ENCODE measurements at regions of chr1 and their contacts with region 1.

Region 1: DNA sequence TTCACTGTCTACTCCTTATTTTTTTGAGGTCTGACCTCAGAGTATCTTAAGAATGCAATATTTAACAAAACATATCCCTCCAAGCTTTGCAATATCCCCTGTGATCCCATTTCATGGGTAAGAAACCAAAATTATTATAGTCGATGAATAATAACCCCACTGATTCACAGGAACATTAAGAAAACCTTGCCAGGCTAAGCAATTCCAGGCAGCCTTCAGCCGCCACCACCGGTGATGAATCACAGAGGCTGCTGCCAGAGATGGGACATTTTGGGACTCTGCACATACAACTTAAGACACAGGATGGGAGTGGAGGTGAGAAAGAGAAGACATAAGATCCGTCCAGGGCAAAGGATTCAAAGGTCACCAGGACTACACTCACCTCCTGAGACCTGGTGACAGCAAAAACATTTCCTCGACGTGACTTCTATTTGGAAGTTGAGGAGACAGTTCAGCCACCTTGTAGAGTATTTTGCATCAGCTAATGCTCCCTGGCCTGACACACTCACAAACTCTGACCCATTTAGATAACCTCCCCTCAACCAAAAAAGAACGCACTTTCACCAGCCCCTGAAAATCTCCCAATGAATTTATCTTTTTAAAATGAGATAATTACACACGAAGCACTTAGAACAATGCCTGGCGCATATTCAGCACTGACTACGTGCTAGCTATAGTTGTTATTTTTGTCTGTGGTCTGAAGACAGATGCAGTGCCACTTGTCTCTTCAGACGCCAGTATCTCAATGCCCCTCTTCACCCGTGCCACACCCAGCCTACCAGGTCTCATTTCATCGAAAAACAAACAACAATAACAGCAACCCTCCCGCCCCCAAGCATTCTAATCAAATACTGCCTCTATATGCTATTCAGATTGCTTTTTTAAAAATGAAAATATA is 17.8 kb upstream of the OVAAL start:
- DNase-seq: peak in 1 of 3 donors; percentile 52
- ATAC-seq: peak; percentile 42 to 77
- H3K4me3 ChIP-seq: no peak overlapping the region
- H3K27ac ChIP-seq: peak overlapping the region; percentile 91
- H3K4me1 ChIP-seq: peaks cover 3% of the 10 kb centered on the region
- H3K27me3 ChIP-seq: no peaks in the 10 kb centered on the region

Region 2: GRCh38 chr1:180386745-180387367 is 154.1 kb before region 1 on chr1:
- intact Hi-C with region 1: no loop called
- DNase-seq: no peak
- ATAC-seq: no peak
- H3K4me3 ChIP-seq: no peak overlapping the region
- H3K27ac ChIP-seq: no peak overlapping the region
- H3K4me1 ChIP-seq: no peaks in the 10 kb centered on the region
- H3K27me3 ChIP-seq: no peaks in the 10 kb centered on the region

Region 3: DNA sequence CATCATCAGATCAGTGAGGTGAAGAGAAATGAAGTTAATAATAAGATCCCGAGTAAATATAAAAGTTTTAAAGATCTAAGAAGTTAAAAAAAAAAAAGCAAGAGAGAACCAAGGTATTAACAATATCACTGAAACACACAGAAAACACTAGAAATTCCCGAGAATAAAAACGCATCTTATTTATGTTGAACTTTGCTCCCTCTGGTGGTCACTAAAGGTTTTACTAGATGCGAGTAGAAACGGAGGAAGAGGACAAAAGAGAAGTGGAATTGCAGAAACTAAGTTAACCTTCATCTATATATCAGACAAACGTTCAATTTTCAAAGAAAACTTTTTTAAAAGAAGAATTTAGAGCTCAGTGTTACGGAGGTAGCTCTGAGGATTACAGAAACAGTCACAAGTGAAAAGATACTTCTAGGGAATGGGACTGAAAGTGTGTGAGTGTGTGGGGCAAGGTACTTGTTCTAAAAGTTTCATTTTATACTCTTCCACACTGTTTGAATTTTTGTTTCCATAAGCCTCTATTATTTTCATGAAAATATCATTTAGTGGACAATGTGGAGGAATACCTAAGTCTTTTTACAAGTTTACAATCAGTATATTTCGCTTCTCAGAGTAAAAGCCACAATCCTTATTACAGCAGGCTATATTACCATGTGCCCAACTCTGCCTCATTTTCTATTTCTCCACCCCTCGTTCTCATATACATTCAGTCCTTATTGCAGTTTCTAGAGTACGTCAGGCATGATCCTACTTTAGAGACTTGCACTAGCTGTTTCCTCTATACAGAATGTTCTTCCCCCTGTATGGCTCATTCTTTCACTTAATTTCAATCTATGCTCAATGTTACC is 58.3 kb before region 1 on chr1:
- intact Hi-C with region 1: no loop called
- DNase-seq: no peak
- ATAC-seq: no peak
- H3K4me3 ChIP-seq: peak overlapping the region; percentile 13
- H3K27ac ChIP-seq: no peak overlapping the region
- H3K4me1 ChIP-seq: no peaks in the 10 kb centered on the region
- H3K27me3 ChIP-seq: no peaks in the 10 kb centered on the region

Region 4: GRCh38 chr1:180611016-180611930 is 70.3 kb after region 1 on chr1:
- intact Hi-C with region 1: loop called in 1 of 4 experiments (anchors 10 kb)
- DNase-seq: no peak
- ATAC-seq: peak; percentile 79 to 86
- H3K4me3 ChIP-seq: no peak overlapping the region
- H3K27ac ChIP-seq: peak overlapping the region; percentile 94
- H3K4me1 ChIP-seq: no peaks in the 10 kb centered on the region
- H3K27me3 ChIP-seq: no peaks in the 10 kb centered on the region